ENCODE measurements at regions of chr2 and their contacts with region 1.

Region 1: DNA sequence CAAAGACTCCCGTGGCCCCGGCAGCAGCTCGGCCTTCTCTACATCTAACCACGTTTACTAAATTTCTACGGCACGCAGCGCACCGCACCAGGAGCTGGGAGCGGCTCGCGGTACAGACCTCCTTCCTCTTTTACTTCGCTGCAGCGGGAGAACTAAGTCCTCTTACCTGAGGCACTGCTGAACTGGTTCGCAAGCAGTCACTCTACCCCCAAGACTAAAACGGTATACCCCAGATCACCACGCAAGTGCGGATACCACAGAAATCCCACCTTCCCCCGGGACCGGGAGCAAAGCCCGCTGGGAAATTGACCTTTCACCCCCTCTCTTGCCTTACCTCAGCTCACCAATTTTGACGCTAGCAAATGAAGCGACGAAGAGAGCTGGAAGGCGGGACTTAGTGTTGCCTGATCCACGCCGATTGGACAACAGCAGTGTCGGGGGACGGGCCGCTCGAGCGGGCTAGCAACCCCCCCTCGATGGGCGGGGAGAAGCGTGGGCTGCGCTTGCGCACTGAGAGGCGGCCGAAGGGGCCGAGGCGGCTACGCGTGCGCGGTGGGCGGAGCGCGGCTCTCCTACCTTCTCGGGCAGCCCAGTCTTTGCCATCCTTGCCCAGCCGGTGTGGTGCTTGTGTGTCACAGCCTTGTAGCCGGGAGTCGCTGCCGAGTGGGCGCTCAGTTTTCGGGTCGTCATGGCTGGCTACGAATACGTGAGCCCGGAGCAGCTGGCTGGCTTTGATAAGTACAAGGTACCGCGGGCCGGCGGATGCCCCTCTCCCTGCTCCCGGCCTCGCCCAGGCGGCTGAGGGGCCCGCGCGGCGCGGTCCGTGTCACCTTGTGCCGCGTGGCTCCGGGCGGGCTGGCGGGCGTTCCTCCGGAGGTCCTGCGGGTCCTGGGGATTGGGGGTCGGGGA is at the start of gene SELENOI:
- H3K4me3 Mint-ChIP-seq: peak within 1 kb of the TSS; percentile 89
- H3K27ac Mint-ChIP-seq: peak within 1 kb of the TSS; percentile 93
- H3K4me1 Mint-ChIP-seq: peaks cover 25% of the 10 kb centered on the region
- H3K27me3 Mint-ChIP-seq: no peaks in the 10 kb centered on the region

Region 2: GRCh38 chr2:25878361-25879132 is 467.3 kb before region 1 on chr2 and contains the start of gene ASXL2:
- intact Hi-C with region 1: loop called (anchors 10 kb)
- H3K4me3 Mint-ChIP-seq: peak within 1 kb of the TSS; percentile 89
- H3K27ac Mint-ChIP-seq: peak within 1 kb of the TSS; percentile 94
- H3K4me1 Mint-ChIP-seq: peaks cover 33% of the 10 kb centered on the region
- H3K27me3 Mint-ChIP-seq: peaks cover 8% of the 10 kb centered on the region

Measured in dendritic cell treated with granulocyte-macrophage colony-stimulating factor and Interleukin-4, amounts not matched to agents 40 ng/mL and 50 ng/mL, for 4 days (primary cell).